GM12878 (cell line): ENCODE measurements at regions of chr3 and their contacts with region 1.

Region 1: DNA sequence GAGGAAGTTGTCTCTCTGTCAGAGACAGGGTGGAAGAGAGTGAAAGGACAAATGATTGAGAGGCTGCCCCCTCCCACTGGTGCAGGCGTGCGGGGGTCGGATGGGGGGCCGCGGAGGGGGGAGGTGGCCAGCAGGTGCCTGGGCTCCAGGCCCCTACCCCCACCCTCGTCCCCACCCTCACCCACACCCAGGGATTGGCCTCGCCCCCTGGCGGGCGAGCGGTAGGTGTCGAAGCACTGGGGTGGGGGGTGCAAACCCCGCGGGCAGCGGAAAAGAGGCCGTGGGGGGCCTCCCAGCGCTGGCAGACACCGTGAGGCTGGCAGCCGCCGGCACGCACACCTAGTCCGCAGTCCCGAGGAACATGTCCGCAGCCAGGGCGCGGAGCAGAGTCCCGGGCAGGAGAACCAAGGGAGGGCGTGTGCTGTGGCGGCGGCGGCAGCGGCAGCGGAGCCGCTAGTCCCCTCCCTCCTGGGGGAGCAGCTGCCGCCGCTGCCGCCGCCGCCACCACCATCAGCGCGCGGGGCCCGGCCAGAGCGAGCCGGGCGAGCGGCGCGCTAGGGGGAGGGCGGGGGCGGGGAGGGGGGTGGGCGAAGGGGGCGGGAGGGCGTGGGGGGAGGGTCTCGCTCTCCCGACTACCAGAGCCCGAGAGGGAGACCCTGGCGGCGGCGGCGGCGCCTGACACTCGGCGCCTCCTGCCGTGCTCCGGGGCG is at the start of gene KAT2B:
- DNase-seq: no peak
- ATAC-seq: peak; percentile 79
- H3K4me3 ChIP-seq: peak within 1 kb of the TSS; percentile 72
- H3K27ac ChIP-seq: peak within 1 kb of the TSS; percentile 79
- H3K4me1 ChIP-seq: peaks cover 10% of the 10 kb centered on the region
- H3K27me3 ChIP-seq: no peaks in the 10 kb centered on the region
- CTCF ChIP-seq: peak; percentile 42 to 78 (median 66)
- EP300 ChIP-seq: no peak
- POLR2A ChIP-seq: peak; percentile 81
- RAD21 ChIP-seq: peak; percentile 46; the same call in 1 of the 2 replicates
- polyA plus RNA-seq, gene KAT2B: 2.9 to 4.3 TPM

Region 2: GRCh38 chr3:19946832-19947548 is 92.9 kb before region 1 on chr3 and contains the start of gene RAB5A:
- CTCF ChIA-PET with region 1: no interaction called
- POLR2A ChIA-PET with region 1: interaction called, 6 read pairs
- RAD21 ChIA-PET with region 1: interaction called, 8 read pairs
- SMC1A ChIA-PET with region 1: interaction called, 14 read pairs
- in situ Hi-C with region 1: no loop called
- intact Hi-C with region 1: loop called (anchors 1 kb)
- DNase-seq: peak; percentile 94
- ATAC-seq: peak; percentile 92
- H3K4me3 ChIP-seq: peak within 1 kb of the TSS; percentile 89
- H3K27ac ChIP-seq: peak within 1 kb of the TSS; percentile 91
- H3K4me1 ChIP-seq: peaks cover 3% of the 10 kb centered on the region; the same call in 1 of the 2 replicates
- H3K27me3 ChIP-seq: no peaks in the 10 kb centered on the region
- CTCF ChIP-seq: no peak
- EP300 ChIP-seq: peak in 1 of 2 experiments; percentile 31; a peak in 1 of 4 replicates
- POLR2A ChIP-seq: peak; percentile 90
- RAD21 ChIP-seq: no peak
- polyA plus RNA-seq, gene RAB5A: 15.8 to 16.2 TPM

Region 3: DNA sequence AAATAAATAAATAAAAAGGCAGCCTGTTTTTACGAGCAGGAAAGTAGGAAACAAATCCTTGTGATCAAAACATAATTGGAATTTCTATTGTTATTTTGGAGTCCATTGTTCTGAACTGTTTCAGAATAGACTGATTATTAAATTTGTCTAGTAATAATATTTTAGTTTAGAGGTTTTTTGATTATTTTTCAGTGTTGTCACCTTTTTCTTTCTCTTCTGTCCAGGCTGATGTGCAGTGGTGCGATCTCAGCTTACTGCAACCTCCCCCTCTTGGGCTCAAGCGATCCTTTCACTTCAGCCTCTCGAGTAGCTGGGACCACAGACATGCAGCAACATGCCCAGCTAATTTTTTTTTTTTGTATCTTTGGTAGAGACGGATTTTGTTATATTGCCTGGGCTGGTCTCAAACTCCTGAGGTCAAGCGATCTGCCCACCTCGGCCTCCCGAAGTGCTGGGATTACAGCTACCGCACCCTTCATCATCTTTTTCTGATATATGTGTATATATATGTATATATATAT is 38.3 kb after region 1 on chr3:
- CTCF ChIA-PET with region 1: interaction called, 5 read pairs
- POLR2A ChIA-PET with region 1: interaction called, 4 read pairs
- RAD21 ChIA-PET with region 1: interaction called, 11 read pairs
- SMC1A ChIA-PET with region 1: interaction called, 4 read pairs
- in situ Hi-C with region 1: no loop called
- intact Hi-C with region 1: no loop called
- DNase-seq: no peak
- ATAC-seq: no peak
- H3K4me3 ChIP-seq: no peak overlapping the region
- H3K27ac ChIP-seq: no peak overlapping the region
- H3K4me1 ChIP-seq: peaks cover 6% of the 10 kb centered on the region
- H3K27me3 ChIP-seq: no peaks in the 10 kb centered on the region
- CTCF ChIP-seq: no peak
- EP300 ChIP-seq: no peak
- POLR2A ChIP-seq: no peak
- RAD21 ChIP-seq: no peak

Region 4: DNA sequence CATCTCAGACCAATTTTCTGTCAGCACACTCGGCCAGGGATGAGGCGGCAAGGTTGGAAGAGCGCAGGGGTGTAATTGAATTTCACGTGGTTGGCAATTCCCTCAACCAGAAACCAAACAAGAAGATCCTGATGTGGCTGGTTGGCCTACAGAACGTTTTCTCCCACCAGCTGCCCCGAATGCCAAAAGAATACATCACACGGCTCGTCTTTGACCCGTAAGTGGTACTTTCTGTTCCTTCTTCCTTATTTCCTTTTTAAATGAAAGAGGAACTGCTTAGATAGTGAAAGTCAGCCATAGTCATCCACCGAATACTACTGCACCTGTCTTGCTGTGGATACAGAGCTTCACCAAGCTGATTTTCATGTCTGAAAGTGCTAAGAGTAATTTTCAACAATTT is 86.0 kb after region 1 on chr3:
- CTCF ChIA-PET with region 1: interaction called, 5 read pairs
- POLR2A ChIA-PET with region 1: interaction called, 6 read pairs
- RAD21 ChIA-PET with region 1: interaction called, 12 read pairs
- SMC1A ChIA-PET with region 1: interaction called, 6 read pairs
- in situ Hi-C with region 1: no loop called
- intact Hi-C with region 1: loop called (anchors 2 kb)
- DNase-seq: peak; percentile 71
- ATAC-seq: peak; percentile 99
- H3K4me3 ChIP-seq: peak overlapping the region; percentile 27; the same call in 1 of the 2 replicates
- H3K27ac ChIP-seq: peak overlapping the region; percentile 62
- H3K4me1 ChIP-seq: peaks cover 14% of the 10 kb centered on the region
- H3K27me3 ChIP-seq: no peaks in the 10 kb centered on the region
- CTCF ChIP-seq: no peak
- EP300 ChIP-seq: peak; percentile 56 to 71; a peak in 2 of 4 replicates
- POLR2A ChIP-seq: no peak
- RAD21 ChIP-seq: no peak

Region 5: DNA sequence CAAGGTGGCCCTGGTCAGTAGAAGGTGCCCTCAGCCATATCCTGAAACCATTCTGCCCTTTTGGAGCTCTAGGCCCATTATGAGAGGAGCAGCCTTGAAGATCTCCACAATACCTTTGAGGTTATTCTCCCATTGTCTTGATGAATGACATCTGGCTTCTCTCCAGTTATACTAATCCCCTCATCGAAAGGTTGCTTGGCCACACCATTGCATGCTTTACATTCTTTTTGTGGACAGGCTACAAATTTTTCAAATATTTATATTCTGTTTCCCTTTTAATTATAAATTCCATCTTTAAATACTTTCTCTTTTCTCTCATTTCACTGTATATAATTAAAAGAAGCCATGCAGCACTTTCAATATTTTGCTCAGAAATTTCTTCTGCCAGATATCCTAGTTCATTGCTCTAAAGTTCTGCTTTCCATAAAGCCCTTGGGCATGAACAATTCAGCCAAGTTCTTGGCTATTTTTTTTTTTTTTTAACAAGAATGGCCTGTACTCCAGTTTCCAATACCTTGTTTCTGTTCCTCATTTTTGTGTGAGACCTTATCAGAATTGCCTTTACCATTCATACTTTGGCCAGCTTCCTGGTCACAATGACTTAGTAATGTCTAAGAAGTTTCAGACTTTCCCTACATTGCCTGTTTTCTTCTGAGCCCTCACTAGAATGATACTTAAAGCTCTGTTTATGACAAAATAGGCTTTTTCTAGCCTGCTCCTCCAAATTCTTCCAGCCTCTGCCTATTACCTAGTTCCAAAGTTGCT is 285.0 kb after region 1 on chr3:
- CTCF ChIA-PET with region 1: no interaction called
- POLR2A ChIA-PET with region 1: no interaction called
- RAD21 ChIA-PET with region 1: no interaction called
- SMC1A ChIA-PET with region 1: interaction called, 3 read pairs
- in situ Hi-C with region 1: no loop called
- intact Hi-C with region 1: loop called (anchors 10 kb)
- DNase-seq: peak; percentile 39
- ATAC-seq: peak; percentile 99
- H3K4me3 ChIP-seq: no peak overlapping the region
- H3K27ac ChIP-seq: no peak overlapping the region
- H3K4me1 ChIP-seq: peaks cover 4% of the 10 kb centered on the region; the same call in 1 of the 2 replicates
- H3K27me3 ChIP-seq: no peaks in the 10 kb centered on the region
- CTCF ChIP-seq: no peak
- EP300 ChIP-seq: 0 out of 4 replicates have a peak, but pooled peaks of 1 of the 2 experiments have one; percentile 34
- POLR2A ChIP-seq: no peak
- RAD21 ChIP-seq: no peak

Region 6: DNA sequence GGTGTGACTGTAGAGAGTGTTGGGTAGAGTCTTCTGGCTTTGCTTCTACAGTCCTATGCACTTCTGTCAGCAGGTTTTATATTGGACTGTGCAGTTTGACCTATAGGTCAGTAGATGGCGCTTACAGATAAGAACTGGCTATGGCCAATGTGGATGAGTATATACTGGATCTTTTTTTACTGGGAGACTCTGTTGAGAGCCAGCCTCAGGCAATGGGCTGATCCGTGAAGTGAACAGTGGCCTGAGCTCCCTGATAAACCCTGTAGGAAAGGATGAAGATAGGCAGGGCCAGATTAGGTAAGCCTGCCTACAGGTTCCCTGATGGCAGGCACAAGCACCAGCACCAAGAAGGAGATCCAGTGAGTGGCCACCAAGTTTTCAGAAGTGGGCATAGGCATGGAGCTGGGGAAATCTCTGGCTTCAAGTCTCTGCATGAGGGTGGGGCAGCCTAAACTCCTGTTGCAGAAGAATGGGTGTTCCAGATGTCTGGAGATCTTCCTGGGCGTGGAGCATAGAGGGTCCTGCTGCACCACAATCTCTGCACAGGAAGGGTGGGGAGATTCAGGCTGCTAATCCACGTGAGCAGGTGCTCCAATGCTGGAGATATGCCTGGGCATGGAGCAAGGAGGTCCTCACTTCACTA is 472.1 kb after region 1 on chr3:
- CTCF ChIA-PET with region 1: no interaction called
- POLR2A ChIA-PET with region 1: no interaction called
- RAD21 ChIA-PET with region 1: no interaction called
- SMC1A ChIA-PET with region 1: no interaction called
- in situ Hi-C with region 1: no loop called
- intact Hi-C with region 1: no loop called
- DNase-seq: no peak
- ATAC-seq: peak; percentile 98
- H3K4me3 ChIP-seq: no peak overlapping the region
- H3K27ac ChIP-seq: no peak overlapping the region
- H3K4me1 ChIP-seq: no peaks in the 10 kb centered on the region
- H3K27me3 ChIP-seq: no peaks in the 10 kb centered on the region
- CTCF ChIP-seq: peak; percentile 64 to 67 (median 67); a peak in 5 of 6 replicates
- EP300 ChIP-seq: no peak
- POLR2A ChIP-seq: no peak
- RAD21 ChIP-seq: peak; percentile 86